ENCODE measurements at regions of chr18 and their contacts with region 1.

Region 1: DNA sequence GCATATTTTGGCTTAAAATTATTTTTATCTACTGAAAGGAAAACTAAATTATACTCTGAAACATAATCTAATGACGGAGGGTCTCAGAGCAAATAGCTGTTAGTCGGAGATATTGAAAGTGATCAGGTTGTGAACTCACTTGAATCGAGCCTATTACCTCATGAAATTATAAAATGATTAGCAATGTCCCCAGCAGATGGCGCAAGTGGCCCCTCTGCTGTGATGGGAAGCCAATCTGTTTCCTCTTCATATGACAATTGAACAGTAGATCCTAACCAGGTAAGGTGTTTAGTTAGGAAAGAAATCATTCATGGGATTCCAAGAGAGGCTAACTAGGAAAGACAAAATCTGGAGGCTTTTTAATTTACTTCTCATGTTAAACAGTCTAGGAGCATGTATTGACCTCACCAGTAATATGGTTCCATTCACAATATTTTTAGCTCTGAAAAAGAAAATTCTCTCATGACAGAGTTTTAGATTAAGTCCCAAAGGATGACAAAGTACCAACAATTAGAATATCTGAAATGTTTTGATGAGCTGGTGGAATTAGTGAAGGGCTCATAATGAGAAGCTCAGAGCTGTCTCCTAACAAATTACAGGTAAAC is 29.9 kb upstream of the MPPE1 start:
- DNase-seq: peak; percentile 86
- H3K4me3 Mint-ChIP-seq: no peak overlapping the region
- H3K27ac Mint-ChIP-seq: no peak overlapping the region
- H3K4me1 Mint-ChIP-seq: no peaks in the 10 kb centered on the region
- H3K27me3 Mint-ChIP-seq: no peaks in the 10 kb centered on the region

Region 2: GRCh38 chr18:10912790-10913545 is 1025.0 kb before region 1 on chr18:
- CTCF ChIA-PET with region 1: no interaction called
- intact Hi-C with region 1: no loop called
- DNase-seq: no peak
- H3K4me3 Mint-ChIP-seq: no peak overlapping the region
- H3K27ac Mint-ChIP-seq: no peak overlapping the region
- H3K4me1 Mint-ChIP-seq: no peaks in the 10 kb centered on the region
- H3K27me3 Mint-ChIP-seq: no peaks in the 10 kb centered on the region

Region 3: GRCh38 chr18:11733031-11733430 is 204.9 kb before region 1 on chr18:
- CTCF ChIA-PET with region 1: interaction called, 11 read pairs
- intact Hi-C with region 1: loop called (anchors 1 kb)
- DNase-seq: peak; percentile 79
- H3K4me3 Mint-ChIP-seq: no peak overlapping the region
- H3K27ac Mint-ChIP-seq: no peak overlapping the region
- H3K4me1 Mint-ChIP-seq: peaks cover 2% of the 10 kb centered on the region
- H3K27me3 Mint-ChIP-seq: peaks cover 20% of the 10 kb centered on the region

Region 4: GRCh38 chr18:11955239-11956029 is 17.5 kb after region 1 on chr18:
- CTCF ChIA-PET with region 1: interaction called, 21 read pairs
- intact Hi-C with region 1: no loop called
- DNase-seq: peak; percentile 19
- H3K4me3 Mint-ChIP-seq: no peak overlapping the region
- H3K27ac Mint-ChIP-seq: no peak overlapping the region
- H3K4me1 Mint-ChIP-seq: peaks cover 5% of the 10 kb centered on the region
- H3K27me3 Mint-ChIP-seq: no peaks in the 10 kb centered on the region

Region 5: DNA sequence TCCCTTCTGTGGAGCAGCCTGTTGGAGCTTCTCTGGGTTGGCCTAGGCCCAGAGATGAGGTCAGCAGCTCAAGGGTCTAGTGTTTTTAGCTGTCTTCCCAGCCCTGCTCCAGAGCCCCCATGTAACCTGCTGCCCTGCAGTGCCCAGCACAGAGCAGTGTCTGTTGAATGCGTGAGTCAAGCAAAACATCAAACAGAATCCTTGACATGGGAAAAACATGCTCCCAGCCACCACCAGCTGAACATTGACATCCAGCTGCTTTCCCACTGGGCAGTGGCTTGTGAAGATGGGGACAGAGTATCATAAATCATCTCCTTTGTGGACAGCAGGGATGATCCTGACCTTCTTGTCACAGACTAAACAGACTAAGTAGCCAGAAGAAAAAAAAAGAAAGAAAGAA is 65.9 kb after region 1 on chr18:
- CTCF ChIA-PET with region 1: interaction called, 234 read pairs
- intact Hi-C with region 1: no loop called
- DNase-seq: no peak
- H3K4me3 Mint-ChIP-seq: no peak overlapping the region
- H3K27ac Mint-ChIP-seq: no peak overlapping the region
- H3K4me1 Mint-ChIP-seq: no peaks in the 10 kb centered on the region
- H3K27me3 Mint-ChIP-seq: no peaks in the 10 kb centered on the region

Region 6: DNA sequence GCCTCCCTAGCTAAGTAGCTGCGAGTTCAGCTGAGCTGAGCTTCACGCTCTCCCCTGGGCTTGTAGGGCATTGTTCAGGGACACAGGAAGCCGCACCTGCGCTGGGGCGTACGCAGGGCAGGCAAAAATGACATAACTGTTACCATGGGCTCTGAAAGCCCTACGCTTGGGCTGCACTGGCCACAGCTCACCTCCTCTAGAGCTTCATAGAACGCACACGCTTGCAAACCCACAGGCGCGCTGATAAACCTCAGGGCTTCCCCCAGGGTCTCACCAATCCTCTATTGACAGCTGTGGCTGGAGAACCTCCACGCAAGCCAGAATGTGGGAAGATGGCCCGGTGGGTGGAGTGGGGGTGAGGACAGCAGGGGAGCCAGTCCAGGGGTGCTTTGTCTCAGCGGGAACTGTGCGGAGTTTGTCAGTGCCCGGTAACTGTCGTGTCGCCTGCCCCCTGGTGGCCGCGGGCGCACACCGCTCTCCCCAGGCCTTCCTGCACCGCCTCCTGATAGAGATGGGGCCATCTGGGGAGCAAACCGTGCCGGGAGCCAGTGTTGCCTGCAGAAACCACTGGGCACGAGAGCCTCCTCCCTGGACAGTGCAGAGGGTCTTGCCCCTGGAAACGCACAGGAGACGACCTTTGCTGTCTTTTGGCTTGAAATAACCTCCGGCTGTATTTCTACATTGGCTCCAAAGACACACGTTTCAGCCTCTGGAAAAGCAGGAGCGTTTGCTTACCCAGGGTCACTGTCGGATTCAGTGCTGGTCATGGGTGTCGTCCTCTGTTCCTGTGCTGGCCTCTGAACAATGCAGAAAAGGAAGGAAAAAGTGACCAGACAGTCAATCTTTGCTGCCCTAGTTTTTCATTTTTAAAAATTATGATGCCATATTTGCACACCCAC is 299.2 kb after region 1 on chr18:
- CTCF ChIA-PET with region 1: no interaction called
- intact Hi-C with region 1: loop called (anchors 1 kb)
- DNase-seq: peak; percentile 78
- H3K4me3 Mint-ChIP-seq: no peak overlapping the region
- H3K27ac Mint-ChIP-seq: no peak overlapping the region
- H3K4me1 Mint-ChIP-seq: no peaks in the 10 kb centered on the region
- H3K27me3 Mint-ChIP-seq: peaks cover 13% of the 10 kb centered on the region

Measured in activated naive CD4-positive, alpha-beta T cell treated with anti-CD3 and anti-CD28 coated beads for 36 hours (primary cell).